ENCODE measurements at regions of chr1 and their contacts with region 1.

Region 1: GRCh38 chr1:183281553-183282091 is 95.6 kb downstream of the LAMC2 start:
- DNase-seq: peak; percentile 90
- H3K4me3 ChIP-seq: no peak overlapping the region
- H3K27ac ChIP-seq: peak overlapping the region; percentile 2
- H3K27me3 ChIP-seq: no peaks in the 10 kb centered on the region
- CTCF ChIP-seq: peak; percentile 91

Region 2: GRCh38 chr1:183168308-183168707 is 113.3 kb before region 1 on chr1:
- CTCF ChIA-PET with region 1: no interaction called
- POLR2A ChIA-PET with region 1: interaction called, 12 read pairs
- DNase-seq: no peak
- H3K4me3 ChIP-seq: no peak overlapping the region
- H3K27ac ChIP-seq: no peak overlapping the region
- H3K27me3 ChIP-seq: no peaks in the 10 kb centered on the region
- CTCF ChIP-seq: no peak

Region 3: DNA sequence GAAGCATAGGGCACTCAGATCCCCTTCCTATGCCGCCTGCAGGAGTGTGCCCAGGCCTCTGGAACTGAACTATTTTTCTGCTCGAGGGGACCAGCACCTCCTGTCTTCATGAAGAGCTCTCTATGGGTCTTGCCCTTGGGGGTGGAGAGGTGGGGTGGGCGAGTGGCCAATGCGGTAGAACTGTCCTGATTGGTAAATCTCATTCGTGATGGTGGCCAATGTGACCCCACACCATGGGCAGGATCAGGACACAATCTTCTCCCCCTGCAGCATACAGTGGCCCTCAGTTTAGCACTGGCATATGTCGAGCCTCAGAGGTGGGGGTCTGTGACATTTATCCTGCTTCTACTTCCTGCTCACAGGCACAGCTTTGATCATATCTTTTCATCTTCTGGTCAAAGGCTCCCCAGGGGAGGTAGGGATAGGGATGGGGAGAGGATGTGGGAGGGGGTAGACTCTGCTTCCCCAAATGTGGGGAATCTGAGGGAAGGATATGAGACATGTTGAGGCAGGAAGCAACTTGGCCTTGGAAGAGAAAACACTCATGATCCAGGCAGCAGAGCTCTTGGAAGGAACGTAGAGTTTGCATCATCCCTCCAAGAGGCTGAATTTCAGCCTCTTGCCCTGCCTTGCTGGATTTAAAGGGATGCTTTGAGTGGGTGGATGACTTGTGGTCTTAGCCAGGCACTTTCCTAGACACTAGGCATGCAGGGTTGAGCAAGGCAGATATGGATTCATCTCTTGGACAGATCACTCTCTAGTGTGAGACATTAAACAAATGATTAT is 13.8 kb before region 1 on chr1:
- CTCF ChIA-PET with region 1: interaction called, 13 read pairs
- POLR2A ChIA-PET with region 1: interaction called, 4 read pairs
- DNase-seq: peak; percentile 84
- H3K4me3 ChIP-seq: no peak overlapping the region
- H3K27ac ChIP-seq: peak overlapping the region; percentile 96
- H3K27me3 ChIP-seq: no peaks in the 10 kb centered on the region
- CTCF ChIP-seq: no peak

Region 4: GRCh38 chr1:183318433-183318832 is 36.8 kb after region 1 on chr1:
- CTCF ChIA-PET with region 1: interaction called, 27 read pairs
- POLR2A ChIA-PET with region 1: no interaction called
- DNase-seq: peak; percentile 83
- H3K4me3 ChIP-seq: no peak overlapping the region
- H3K27ac ChIP-seq: peak overlapping the region; percentile 52
- H3K27me3 ChIP-seq: peaks cover 2% of the 10 kb centered on the region
- CTCF ChIP-seq: peak; percentile 83

Region 5: DNA sequence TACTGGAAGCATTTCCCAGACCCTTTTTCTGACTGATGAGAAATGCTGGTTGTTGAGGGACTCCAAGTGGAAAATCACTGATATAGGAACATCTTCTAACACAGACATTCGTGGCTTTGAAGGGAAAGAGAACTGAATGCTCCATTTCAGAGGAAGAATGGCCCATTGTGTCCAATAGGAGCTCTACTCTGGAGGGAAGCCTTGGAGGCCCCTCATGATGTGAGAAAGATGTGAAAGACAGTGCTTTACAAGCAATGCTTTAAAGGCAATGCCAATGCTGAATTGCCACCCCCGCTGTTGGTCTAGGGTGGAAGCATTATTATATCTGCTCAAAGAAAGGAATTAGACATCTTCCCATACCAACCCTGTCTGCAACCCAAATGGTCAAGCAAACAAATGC is 122.8 kb after region 1 on chr1:
- CTCF ChIA-PET with region 1: no interaction called
- POLR2A ChIA-PET with region 1: no interaction called
- DNase-seq: no peak
- H3K4me3 ChIP-seq: no peak overlapping the region
- H3K27ac ChIP-seq: no peak overlapping the region
- H3K27me3 ChIP-seq: peaks cover 19% of the 10 kb centered on the region
- CTCF ChIP-seq: no peak

Region 6: DNA sequence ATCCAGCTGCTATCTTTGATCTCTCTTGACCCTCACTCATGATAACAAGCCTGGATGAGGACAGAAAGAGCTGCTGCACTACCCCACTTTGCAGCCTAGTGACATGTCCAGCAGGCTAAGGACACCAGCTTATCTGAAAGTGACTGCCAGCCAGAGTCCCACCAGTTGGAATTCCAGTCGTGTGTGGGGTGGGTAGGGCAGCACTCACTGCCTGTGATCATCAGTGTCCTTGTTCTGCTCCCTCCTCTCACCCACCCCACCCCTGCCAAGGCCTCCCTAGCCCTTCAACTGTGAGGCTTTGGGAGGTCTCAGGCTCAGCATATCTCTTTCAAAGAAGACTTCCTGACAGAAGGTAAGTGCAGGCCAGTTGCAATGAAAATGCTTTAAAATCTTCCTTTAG is 152.1 kb after region 1 on chr1:
- CTCF ChIA-PET with region 1: no interaction called
- POLR2A ChIA-PET with region 1: no interaction called
- DNase-seq: no peak
- H3K4me3 ChIP-seq: no peak overlapping the region
- H3K27ac ChIP-seq: no peak overlapping the region
- H3K27me3 ChIP-seq: peaks cover 17% of the 10 kb centered on the region
- CTCF ChIP-seq: no peak